IMR-90 (cell line): ENCODE measurements at regions of chr4 and their contacts with region 1.

Region 1: GRCh38 chr4:128768373-128768996 is 41.0 kb upstream of the JADE1 start:
- DNase-seq: peak; percentile 51
- ATAC-seq: peak; percentile 60
- H3K4me3 ChIP-seq: no peak overlapping the region
- H3K27ac ChIP-seq: no peak overlapping the region
- H3K4me1 ChIP-seq: no peaks in the 10 kb centered on the region
- H3K27me3 ChIP-seq: no peaks in the 10 kb centered on the region
- CTCF ChIP-seq: no peak
- POLR2A ChIP-seq: no peak
- RAD21 ChIP-seq: no peak

Region 2: GRCh38 chr4:127521463-127521862 is 1247.0 kb before region 1 on chr4:
- CTCF ChIA-PET with region 1: no interaction called
- POLR2A ChIA-PET with region 1: no interaction called
- dilution Hi-C with region 1: no loop called
- in situ Hi-C with region 1: no loop called
- intact Hi-C with region 1: no loop called
- DNase-seq: no peak
- ATAC-seq: no peak
- H3K4me3 ChIP-seq: no peak overlapping the region
- H3K27ac ChIP-seq: no peak overlapping the region
- H3K4me1 ChIP-seq: no peaks in the 10 kb centered on the region
- H3K27me3 ChIP-seq: no peaks in the 10 kb centered on the region; the same call in 1 of the 2 replicates
- CTCF ChIP-seq: no peak
- POLR2A ChIP-seq: no peak
- RAD21 ChIP-seq: no peak

Region 3: DNA sequence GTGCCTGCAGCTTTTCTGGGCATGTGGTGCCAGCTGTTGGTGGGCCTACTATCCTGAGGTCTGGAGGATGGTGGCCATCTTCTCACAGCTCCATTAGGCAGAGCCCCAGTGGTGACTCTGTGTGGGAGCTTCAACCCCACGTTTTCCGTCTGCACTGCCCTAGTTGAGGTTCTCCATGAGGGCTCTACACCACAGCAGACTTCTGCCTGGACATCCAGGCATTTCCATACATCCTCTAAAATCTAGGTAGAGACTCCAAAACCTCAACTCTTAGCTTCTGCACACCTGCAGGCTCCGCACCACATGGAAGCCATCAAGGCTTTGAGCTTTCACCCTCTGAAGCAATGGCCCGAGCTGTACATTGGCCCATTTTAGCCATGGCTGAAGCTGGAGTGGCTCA is 327.6 kb before region 1 on chr4:
- CTCF ChIA-PET with region 1: no interaction called
- POLR2A ChIA-PET with region 1: no interaction called
- dilution Hi-C with region 1: no loop called
- in situ Hi-C with region 1: no loop called
- intact Hi-C with region 1: no loop called
- DNase-seq: no peak
- ATAC-seq: no peak
- H3K4me3 ChIP-seq: no peak overlapping the region
- H3K27ac ChIP-seq: no peak overlapping the region
- H3K4me1 ChIP-seq: no peaks in the 10 kb centered on the region
- H3K27me3 ChIP-seq: no peaks in the 10 kb centered on the region
- CTCF ChIP-seq: no peak
- POLR2A ChIP-seq: no peak
- RAD21 ChIP-seq: no peak

Region 4: DNA sequence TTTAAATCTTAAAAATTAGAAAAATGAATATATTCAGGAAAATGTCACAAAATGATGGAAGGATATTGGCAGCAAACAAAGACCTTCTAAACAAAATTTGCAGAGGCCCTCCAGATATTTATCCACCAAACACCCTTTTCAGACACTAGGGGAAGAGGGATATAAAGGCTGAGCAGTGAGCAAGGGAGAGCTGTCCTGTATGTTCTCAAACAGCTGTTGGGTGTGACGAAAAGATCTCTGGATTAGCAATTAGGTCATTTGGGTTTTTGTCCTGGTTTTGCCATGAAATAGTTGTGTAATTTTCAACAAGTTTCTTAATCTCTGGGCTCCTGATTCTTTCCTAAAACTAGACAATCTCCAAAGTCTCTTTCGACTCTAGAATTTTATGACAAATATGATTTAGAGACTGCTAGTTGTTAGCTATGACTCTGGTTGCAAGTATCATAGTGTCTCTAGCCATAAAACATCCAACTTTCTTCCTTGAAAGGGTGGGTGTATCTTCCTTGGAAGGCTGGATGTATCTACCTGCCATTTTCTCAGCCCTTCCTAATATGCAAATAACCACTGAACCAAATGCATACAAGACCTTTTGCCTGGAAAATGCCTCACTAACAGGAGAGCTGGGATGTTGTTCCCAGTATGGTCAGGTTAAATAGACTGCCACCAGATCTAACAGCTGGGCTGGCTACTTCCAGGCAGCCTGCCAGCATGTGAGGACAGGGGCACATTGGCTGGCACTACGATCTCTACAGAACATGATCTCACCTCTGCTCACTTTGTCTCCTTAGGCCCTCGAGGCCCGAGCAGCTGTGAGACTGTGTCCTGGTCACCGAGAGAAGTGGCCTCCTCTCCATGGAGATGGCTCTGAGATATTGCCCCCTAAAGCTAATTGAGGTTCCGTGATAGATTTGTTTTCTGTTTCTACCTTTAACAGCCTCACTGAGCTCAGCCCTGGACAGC is 184.5 kb before region 1 on chr4:
- CTCF ChIA-PET with region 1: no interaction called
- POLR2A ChIA-PET with region 1: no interaction called
- dilution Hi-C with region 1: no loop called
- in situ Hi-C with region 1: no loop called
- intact Hi-C with region 1: no loop called
- DNase-seq: no peak
- ATAC-seq: no peak
- H3K4me3 ChIP-seq: no peak overlapping the region
- H3K27ac ChIP-seq: no peak overlapping the region
- H3K4me1 ChIP-seq: no peaks in the 10 kb centered on the region
- H3K27me3 ChIP-seq: no peaks in the 10 kb centered on the region
- CTCF ChIP-seq: no peak
- POLR2A ChIP-seq: no peak
- RAD21 ChIP-seq: no peak

Region 5: DNA sequence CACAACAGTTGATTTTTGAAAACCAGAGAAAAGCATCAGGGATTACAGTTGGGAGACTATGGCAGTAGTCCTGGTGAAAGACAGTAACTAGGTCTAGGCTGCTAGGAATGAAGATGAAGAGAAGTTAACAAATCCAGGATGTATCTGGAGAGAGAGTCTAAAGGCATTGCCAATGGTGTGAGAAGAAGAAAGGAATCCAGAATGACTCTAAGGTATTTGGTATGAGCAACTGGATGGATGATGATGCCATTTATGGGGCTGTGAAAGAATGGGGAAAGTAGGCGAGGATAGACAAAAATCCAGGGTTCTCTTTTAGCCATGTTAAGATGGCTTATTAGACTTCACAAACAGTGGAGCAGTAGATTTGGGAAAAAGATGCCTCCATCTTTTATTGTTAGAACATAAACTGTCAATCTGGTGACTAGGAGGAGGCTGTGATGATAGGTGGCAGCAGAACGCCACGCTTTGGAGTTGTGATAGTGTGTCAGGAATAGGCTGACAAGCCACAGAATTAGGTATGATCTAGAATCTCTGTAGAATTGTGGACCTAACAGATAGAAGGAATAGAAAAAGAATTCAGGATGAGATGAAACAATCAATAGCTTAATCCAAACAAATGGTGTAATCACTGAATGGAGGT is 13.7 kb after region 1 on chr4:
- CTCF ChIA-PET with region 1: no interaction called
- POLR2A ChIA-PET with region 1: interaction called, 10 read pairs
- dilution Hi-C with region 1: no loop called
- in situ Hi-C with region 1: no loop called
- intact Hi-C with region 1: no loop called
- DNase-seq: peak; percentile 37
- ATAC-seq: peak; percentile 67
- H3K4me3 ChIP-seq: no peak overlapping the region
- H3K27ac ChIP-seq: no peak overlapping the region
- H3K4me1 ChIP-seq: peaks cover 3% of the 10 kb centered on the region; the same call in 1 of the 2 replicates
- H3K27me3 ChIP-seq: no peaks in the 10 kb centered on the region
- CTCF ChIP-seq: no peak
- POLR2A ChIP-seq: no peak
- RAD21 ChIP-seq: no peak

Region 6: GRCh38 chr4:129490516-129490915 is 722.0 kb after region 1 on chr4:
- CTCF ChIA-PET with region 1: no interaction called
- POLR2A ChIA-PET with region 1: no interaction called
- dilution Hi-C with region 1: no loop called
- in situ Hi-C with region 1: no loop called
- intact Hi-C with region 1: no loop called
- DNase-seq: no peak
- ATAC-seq: no peak
- H3K4me3 ChIP-seq: no peak overlapping the region
- H3K27ac ChIP-seq: no peak overlapping the region
- H3K4me1 ChIP-seq: no peaks in the 10 kb centered on the region
- H3K27me3 ChIP-seq: no peaks in the 10 kb centered on the region
- CTCF ChIP-seq: no peak
- POLR2A ChIP-seq: no peak
- RAD21 ChIP-seq: no peak